AG04450 (cell line): ENCODE measurements at regions of chr19 and their contacts with region 1.

Region 1: DNA sequence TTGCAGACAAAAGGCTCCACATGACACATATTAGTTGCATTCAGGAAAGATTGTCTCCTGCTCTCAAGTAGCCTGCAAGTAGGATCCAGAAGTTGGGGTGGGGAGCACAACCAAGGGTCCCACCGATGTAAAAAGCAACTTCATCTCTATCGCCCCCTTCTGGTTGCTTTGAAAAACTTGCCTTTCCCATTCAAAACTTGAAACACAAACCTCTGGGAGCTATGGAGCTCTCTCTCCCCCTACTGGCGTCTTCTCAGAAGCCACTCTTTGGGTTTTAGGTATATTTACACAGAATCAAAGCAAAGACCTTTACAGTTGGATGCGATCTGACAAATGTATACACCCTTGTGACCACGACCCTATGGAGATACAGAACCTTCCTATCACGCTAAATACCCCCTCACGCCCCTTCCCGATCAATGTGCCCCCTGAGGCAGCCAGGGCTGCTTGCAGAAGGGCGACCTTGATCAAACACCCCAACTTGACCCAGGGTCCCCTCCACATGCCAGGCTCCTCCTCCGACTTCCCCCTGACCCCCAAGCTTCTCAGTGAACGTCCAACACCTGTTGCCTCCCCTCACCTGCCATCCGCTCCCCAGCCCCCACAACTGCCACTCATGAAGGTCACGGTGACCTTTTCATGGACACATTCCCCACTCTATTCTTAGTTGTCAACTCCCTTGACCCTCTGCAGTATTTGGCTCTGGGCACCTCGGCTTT is 10.1 kb downstream of the NOSIP start:
- DNase-seq: peak; percentile 73
- H3K4me3 ChIP-seq: no peak overlapping the region
- H3K27ac ChIP-seq: no peak overlapping the region
- H3K27me3 ChIP-seq: no peaks in the 10 kb centered on the region
- CTCF ChIP-seq: peak; percentile 99

Region 2: GRCh38 chr19:49368711-49369358 is 201.5 kb before region 1 on chr19:
- CTCF ChIA-PET with region 1: no interaction called
- POLR2A ChIA-PET with region 1: no interaction called
- DNase-seq: no peak
- H3K4me3 ChIP-seq: no peak overlapping the region
- H3K27ac ChIP-seq: no peak overlapping the region
- H3K27me3 ChIP-seq: peaks cover 6% of the 10 kb centered on the region
- CTCF ChIP-seq: no peak

Region 3: DNA sequence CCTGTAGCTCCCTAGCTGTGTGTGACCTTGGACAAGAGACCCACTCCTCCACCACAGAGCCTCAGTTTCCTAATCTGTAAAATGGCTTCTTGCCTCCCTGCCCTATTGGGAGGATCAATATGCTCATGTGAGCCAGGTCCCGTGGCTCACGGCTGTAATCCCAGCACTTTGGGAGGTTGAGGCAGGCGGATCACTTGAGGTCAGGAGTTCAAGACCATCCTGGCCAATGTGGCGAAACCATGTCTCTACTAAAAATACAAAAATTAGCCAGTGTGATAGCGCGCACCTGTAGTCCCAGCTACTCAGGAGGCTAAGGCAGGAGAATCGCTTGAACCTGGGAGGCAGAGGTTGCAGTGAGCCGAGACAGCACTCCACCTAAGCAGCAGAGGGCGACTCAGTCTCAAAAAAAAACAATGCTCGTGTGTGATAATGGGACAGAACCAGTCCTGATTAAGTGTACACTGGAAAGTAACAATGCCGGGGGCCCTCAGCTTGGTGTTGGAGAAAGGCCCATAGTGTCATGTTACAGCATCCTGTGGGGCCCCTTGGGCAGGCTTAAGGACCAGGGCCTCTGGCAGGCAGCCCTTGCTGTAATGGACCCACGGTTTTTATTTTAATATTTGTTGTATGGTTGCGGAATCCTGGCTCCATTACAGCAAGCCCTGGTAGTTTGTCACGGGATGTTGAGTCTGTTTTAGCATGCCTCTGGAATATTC is 67.3 kb before region 1 on chr19:
- CTCF ChIA-PET with region 1: interaction called, 48 read pairs
- POLR2A ChIA-PET with region 1: interaction called, 4 read pairs
- DNase-seq: peak; percentile 59
- H3K4me3 ChIP-seq: no peak overlapping the region
- H3K27ac ChIP-seq: peak overlapping the region; percentile 47
- H3K27me3 ChIP-seq: no peaks in the 10 kb centered on the region
- CTCF ChIP-seq: peak; percentile 67

Region 4: GRCh38 chr19:49555600-49556411 is 14.5 kb before region 1 on chr19:
- CTCF ChIA-PET with region 1: interaction called, 75 read pairs
- POLR2A ChIA-PET with region 1: no interaction called
- DNase-seq: no peak
- H3K4me3 ChIP-seq: no peak overlapping the region
- H3K27ac ChIP-seq: no peak overlapping the region
- H3K27me3 ChIP-seq: no peaks in the 10 kb centered on the region
- CTCF ChIP-seq: no peak

Region 5: GRCh38 chr19:49590071-49590970 is 20.0 kb after region 1 on chr19:
- CTCF ChIA-PET with region 1: interaction called, 10 read pairs
- POLR2A ChIA-PET with region 1: no interaction called
- DNase-seq: peak; percentile 88
- H3K4me3 ChIP-seq: peak overlapping the region; percentile 78
- H3K27ac ChIP-seq: peak overlapping the region; percentile 68
- H3K27me3 ChIP-seq: no peaks in the 10 kb centered on the region
- CTCF ChIP-seq: 0 out of 2 replicates have a peak, but pooled peaks have one; percentile 3

Region 6: DNA sequence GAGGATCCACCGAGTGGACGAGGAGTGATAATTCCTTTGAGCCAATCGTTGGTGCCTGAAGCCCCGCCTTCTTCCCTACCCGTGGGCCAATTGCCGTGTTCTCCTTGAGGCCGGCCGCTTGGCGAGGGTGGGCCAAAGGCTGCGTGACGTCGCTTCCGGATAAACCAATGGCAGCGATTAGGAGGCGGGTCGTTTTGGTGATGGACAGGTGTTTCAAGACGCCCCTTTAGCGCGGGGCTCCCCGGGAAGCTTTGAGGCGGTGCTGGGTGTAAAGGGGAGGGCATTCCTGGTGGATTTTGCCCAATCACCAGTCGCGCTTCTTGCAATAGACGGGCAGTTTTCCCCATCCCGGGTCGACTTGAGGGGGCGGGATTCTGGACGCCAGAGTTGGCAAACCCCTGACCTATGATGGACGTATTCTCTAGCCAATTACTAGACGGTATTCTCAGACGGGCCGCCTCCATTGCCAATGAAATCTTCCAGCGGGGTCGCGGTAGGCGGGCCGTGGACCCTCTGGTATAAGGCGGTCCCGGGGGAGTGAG is 106.5 kb after region 1 on chr19:
- CTCF ChIA-PET with region 1: interaction called, 12 read pairs
- POLR2A ChIA-PET with region 1: no interaction called
- DNase-seq: peak; percentile 100
- H3K4me3 ChIP-seq: peak overlapping the region; percentile 98
- H3K27ac ChIP-seq: peak overlapping the region; percentile 94
- H3K27me3 ChIP-seq: no peaks in the 10 kb centered on the region
- CTCF ChIP-seq: no peak